Calu3 (cell line): ENCODE measurements at regions of chr2 and their contacts with region 1.

Region 1: DNA sequence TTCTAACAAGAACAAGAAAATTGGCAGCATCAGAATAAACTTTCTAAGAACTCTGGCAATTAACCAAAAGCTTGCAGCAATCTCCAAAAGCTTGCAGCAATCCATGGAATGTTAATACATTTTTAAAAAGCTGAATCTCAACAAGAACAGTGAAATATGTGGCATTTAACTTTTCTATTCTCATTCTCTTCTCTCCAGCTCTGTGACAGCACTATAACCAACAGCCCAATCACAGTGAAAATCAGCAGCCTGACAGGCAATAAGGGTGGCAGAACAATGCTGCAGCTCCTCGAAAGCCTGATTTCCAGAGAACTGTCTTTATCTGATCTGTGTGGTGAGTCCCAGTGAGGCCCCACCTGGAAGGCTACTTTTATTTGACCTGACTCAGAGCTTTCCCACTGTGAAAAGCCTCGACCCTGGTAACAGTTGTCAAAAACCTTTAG is 60.0 kb downstream of the TMEM131 start:
- DNase-seq: no peak
- H3K4me3 Mint-ChIP-seq: no peak overlapping the region
- H3K27ac Mint-ChIP-seq: no peak overlapping the region
- H3K4me1 Mint-ChIP-seq: peaks cover 15% of the 10 kb centered on the region
- H3K27me3 Mint-ChIP-seq: no peaks in the 10 kb centered on the region
- CTCF ChIP-seq: no peak

Region 2: GRCh38 chr2:97831121-97831520 is 104.6 kb before region 1 on chr2:
- CTCF ChIA-PET with region 1: no interaction called
- intact Hi-C with region 1: no loop called
- DNase-seq: no peak
- H3K4me3 Mint-ChIP-seq: no peak overlapping the region
- H3K27ac Mint-ChIP-seq: no peak overlapping the region
- H3K4me1 Mint-ChIP-seq: peaks cover 14% of the 10 kb centered on the region
- H3K27me3 Mint-ChIP-seq: no peaks in the 10 kb centered on the region
- CTCF ChIP-seq: no peak

Region 3: DNA sequence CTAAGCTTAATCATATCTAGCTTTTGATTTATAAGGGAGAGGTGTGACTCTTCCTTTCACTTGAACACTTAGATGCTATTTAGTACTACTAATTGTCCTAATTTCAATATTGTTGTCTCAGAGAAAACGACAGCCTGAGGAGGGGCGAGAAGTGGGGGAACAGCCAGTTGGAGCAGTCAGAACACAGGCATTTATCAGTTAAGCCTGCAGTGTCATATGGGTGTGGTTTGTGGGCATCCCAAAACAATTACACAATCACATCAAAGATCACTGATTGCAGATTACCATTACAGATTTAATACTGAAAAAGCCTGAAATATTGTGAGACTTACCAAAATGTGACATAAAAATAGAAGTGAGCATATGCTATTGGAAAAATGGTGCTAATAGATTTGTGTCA is 44.2 kb after region 1 on chr2:
- CTCF ChIA-PET with region 1: no interaction called
- intact Hi-C with region 1: loop called (anchors 5 kb)
- DNase-seq: no peak
- H3K4me3 Mint-ChIP-seq: no peak overlapping the region
- H3K27ac Mint-ChIP-seq: no peak overlapping the region
- H3K4me1 Mint-ChIP-seq: no peaks in the 10 kb centered on the region
- H3K27me3 Mint-ChIP-seq: no peaks in the 10 kb centered on the region
- CTCF ChIP-seq: no peak